Activated CD4-positive, alpha-beta T cell treated with anti-CD3 and anti-CD28 coated beads for 36 hours (primary cell): ENCODE measurements at regions of chr12 and their contacts with region 1.

Region 1: DNA sequence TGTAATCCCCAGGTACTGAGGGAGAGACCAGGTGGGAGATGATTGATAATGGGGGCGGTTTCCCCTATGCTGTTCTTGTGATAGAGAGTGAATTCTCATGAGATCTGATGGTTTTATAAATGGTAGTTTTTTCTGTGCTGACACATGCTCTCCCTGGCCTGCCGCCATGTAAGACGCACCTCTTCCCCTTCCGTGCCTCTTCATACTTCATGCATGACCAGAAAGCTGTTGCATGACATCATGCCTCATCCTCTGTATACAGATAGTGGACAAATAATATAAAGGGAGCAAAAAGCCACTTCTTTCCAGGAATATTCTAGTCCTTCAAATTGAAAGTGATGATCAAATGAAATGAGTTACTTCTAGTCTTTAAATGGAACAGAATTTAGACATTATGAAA is 47.3 kb upstream of the LRIG3 start:
- DNase-seq: no peak
- ATAC-seq: no peak
- H3K4me3 Mint-ChIP-seq: no peak overlapping the region
- H3K27ac Mint-ChIP-seq: no peak overlapping the region
- H3K4me1 Mint-ChIP-seq: no peaks in the 10 kb centered on the region
- H3K27me3 Mint-ChIP-seq: no peaks in the 10 kb centered on the region

Region 2: GRCh38 chr12:59005195-59005955 is 37.8 kb after region 1 on chr12:
- CTCF ChIA-PET with region 1: no interaction called
- POLR2A ChIA-PET with region 1: no interaction called
- intact Hi-C with region 1: no loop called
- DNase-seq: no peak
- ATAC-seq: no peak
- H3K4me3 Mint-ChIP-seq: no peak overlapping the region
- H3K27ac Mint-ChIP-seq: no peak overlapping the region
- H3K4me1 Mint-ChIP-seq: no peaks in the 10 kb centered on the region
- H3K27me3 Mint-ChIP-seq: no peaks in the 10 kb centered on the region

Region 3: GRCh38 chr12:59403259-59403932 is 435.8 kb after region 1 on chr12:
- CTCF ChIA-PET with region 1: no interaction called
- POLR2A ChIA-PET with region 1: no interaction called
- intact Hi-C with region 1: no loop called
- DNase-seq: peak; percentile 41
- ATAC-seq: peak; percentile 50
- H3K4me3 Mint-ChIP-seq: no peak overlapping the region
- H3K27ac Mint-ChIP-seq: no peak overlapping the region
- H3K4me1 Mint-ChIP-seq: peaks cover 9% of the 10 kb centered on the region
- H3K27me3 Mint-ChIP-seq: peaks cover 2% of the 10 kb centered on the region

Region 4: DNA sequence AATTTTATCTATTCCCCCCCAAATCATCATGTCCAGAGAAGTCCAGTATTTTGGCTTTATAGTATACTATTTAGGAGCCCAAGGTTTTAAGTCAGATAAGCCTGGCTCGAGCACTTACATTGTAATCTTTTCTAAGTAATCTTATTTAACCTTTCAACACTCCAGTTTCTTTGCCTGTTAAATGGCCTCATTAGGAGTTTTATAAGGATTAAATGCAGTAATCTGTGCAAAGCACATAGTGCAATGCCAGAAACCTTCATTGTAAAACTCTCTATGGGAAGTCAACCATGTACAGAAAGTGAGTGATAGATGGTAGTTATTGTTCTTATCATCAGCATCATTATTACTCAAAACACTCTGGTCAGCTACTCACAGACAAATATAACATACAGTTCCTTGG is 1958.7 kb after region 1 on chr12:
- CTCF ChIA-PET with region 1: no interaction called
- POLR2A ChIA-PET with region 1: interaction called, 12 read pairs
- intact Hi-C with region 1: no loop called
- DNase-seq: no peak
- ATAC-seq: no peak
- H3K4me3 Mint-ChIP-seq: no peak overlapping the region
- H3K27ac Mint-ChIP-seq: no peak overlapping the region
- H3K4me1 Mint-ChIP-seq: no peaks in the 10 kb centered on the region
- H3K27me3 Mint-ChIP-seq: no peaks in the 10 kb centered on the region